ENCODE measurements at regions of chr7 and their contacts with region 1.

Region 1: DNA sequence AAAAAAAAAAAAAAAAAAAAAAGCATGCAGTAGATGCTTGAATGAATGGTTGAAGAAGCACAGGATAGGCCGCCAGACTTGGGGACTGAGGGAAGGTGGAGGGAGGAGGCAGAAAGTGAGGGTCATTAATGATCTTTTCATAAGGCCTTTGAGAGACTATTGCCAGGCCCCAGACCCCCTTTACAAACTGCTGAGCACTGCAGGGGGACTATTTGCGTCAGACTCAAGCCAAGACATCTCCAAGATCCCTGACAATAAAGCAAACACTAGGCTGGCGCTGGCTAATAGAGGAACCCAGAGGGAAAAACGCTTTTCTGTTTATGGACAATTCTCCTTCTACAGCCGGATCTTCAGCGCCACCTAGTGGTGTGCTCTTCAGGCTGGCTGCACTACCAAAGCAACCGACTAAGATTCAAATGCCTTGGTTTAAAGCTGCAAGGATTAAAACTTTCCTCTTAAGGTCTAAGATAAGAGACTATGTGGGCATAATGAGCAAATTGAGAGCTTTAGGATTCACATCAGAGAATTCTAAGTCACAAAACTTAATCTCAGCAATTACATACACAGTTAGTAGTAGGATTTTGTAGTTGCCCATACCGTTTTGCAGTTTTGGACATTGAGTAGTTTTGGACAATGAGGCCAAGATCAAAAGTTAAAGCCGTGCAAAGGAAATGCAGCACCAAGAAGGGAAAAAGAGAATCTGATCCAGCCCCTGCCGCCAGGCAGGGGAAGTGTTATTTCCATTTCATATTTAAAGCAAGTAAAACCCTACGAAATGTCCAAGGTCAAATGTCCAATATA is 17.9 kb upstream of the AGK start:
- DNase-seq: peak; percentile 46 to 70
- H3K4me3 ChIP-seq: no peak overlapping the region
- H3K4me3 Mint-ChIP-seq: no peak overlapping the region
- H3K27ac Mint-ChIP-seq: no peak overlapping the region
- H3K4me1 ChIP-seq: no peaks in the 10 kb centered on the region
- H3K4me1 Mint-ChIP-seq: no peaks in the 10 kb centered on the region
- H3K27me3 ChIP-seq: peaks cover 3% of the 10 kb centered on the region
- H3K27me3 Mint-ChIP-seq: peaks cover 13% of the 10 kb centered on the region
- CTCF ChIP-seq: peak; percentile 91 to 96

Region 2: GRCh38 chr7:141072548-141073172 is 460.7 kb before region 1 on chr7:
- CTCF ChIA-PET with region 1: no interaction called
- POLR2A ChIA-PET with region 1: no interaction called
- intact Hi-C with region 1: loop called (anchors 2 kb)
- DNase-seq: no peak
- H3K4me3 ChIP-seq: no peak overlapping the region
- H3K4me3 Mint-ChIP-seq: peak overlapping the region; percentile 60
- H3K27ac Mint-ChIP-seq: no peak overlapping the region
- H3K4me1 ChIP-seq: no peaks in the 10 kb centered on the region
- H3K4me1 Mint-ChIP-seq: no peaks in the 10 kb centered on the region
- H3K27me3 ChIP-seq: no peaks in the 10 kb centered on the region
- H3K27me3 Mint-ChIP-seq: peaks cover 4% of the 10 kb centered on the region
- CTCF ChIP-seq: no peak

Region 3: DNA sequence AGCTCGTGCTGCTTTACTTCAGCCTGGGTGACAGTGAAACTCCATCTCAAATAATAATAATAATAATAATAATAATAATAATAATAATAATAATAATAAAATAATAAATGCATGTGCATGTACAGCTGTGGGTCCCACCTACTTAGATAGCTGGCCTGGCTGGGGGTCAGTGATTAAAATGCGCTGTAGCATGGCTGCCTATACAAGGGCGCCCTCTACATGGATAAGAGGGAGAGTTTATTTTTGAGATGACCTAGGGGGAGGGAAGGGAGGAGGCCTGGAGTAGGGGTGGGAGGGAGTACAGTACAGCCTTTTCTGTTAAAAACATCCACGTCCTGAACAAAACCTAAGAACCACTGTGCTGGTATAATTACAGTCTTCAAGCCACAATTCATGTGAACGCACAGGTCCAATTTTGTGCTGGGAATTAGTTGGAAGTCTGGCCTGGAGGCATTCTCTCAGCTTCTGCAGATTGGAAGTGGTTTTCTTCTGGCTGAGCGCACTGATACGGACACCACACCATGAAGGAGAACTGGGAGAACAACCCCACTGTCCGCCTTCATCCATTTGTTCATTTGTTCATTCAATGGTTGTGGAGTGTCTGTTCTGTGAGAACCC is 313.0 kb before region 1 on chr7:
- CTCF ChIA-PET with region 1: no interaction called
- POLR2A ChIA-PET with region 1: no interaction called
- intact Hi-C with region 1: no loop called
- DNase-seq: no peak
- H3K4me3 ChIP-seq: no peak overlapping the region
- H3K4me3 Mint-ChIP-seq: no peak overlapping the region
- H3K27ac Mint-ChIP-seq: no peak overlapping the region
- H3K4me1 ChIP-seq: no peaks in the 10 kb centered on the region
- H3K4me1 Mint-ChIP-seq: no peaks in the 10 kb centered on the region
- H3K27me3 ChIP-seq: no peaks in the 10 kb centered on the region; the same call in 1 of the 2 replicates
- H3K27me3 Mint-ChIP-seq: peaks cover 24% of the 10 kb centered on the region
- CTCF ChIP-seq: peak; percentile 15 to 36

Region 4: GRCh38 chr7:141251957-141252356 is 281.4 kb before region 1 on chr7:
- CTCF ChIA-PET with region 1: no interaction called
- POLR2A ChIA-PET with region 1: no interaction called
- intact Hi-C with region 1: loop called (anchors 1 kb)
- DNase-seq: no peak
- H3K4me3 ChIP-seq: no peak overlapping the region
- H3K4me3 Mint-ChIP-seq: no peak overlapping the region
- H3K27ac Mint-ChIP-seq: no peak overlapping the region
- H3K4me1 ChIP-seq: no peaks in the 10 kb centered on the region
- H3K4me1 Mint-ChIP-seq: no peaks in the 10 kb centered on the region
- H3K27me3 ChIP-seq: no peaks in the 10 kb centered on the region; the same call in 1 of the 2 replicates
- H3K27me3 Mint-ChIP-seq: peaks cover 19% of the 10 kb centered on the region
- CTCF ChIP-seq: peak in 1 of 2 experiments; percentile 6

Region 5: DNA sequence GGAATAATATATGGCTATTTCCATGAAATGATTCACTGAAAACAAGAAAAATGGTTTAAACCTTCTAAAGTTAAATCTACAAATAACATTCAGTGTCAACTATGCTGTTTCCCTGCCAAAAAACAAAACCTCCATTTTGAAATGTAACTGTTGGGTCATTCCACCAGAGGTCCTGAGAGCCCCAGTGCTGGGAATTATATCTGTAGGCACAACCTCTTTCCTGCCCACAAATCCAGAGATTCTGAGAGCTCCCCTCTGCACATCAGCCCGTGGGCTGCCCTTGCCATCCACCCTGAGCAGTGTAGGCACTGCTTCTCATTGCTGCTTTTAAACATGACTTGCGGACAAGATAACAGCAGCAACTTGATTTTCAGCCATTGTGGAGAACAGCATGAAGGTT is 260.9 kb before region 1 on chr7:
- CTCF ChIA-PET with region 1: no interaction called
- POLR2A ChIA-PET with region 1: no interaction called
- intact Hi-C with region 1: loop called (anchors 1 kb)
- DNase-seq: no peak
- H3K4me3 ChIP-seq: no peak overlapping the region
- H3K4me3 Mint-ChIP-seq: no peak overlapping the region
- H3K27ac Mint-ChIP-seq: no peak overlapping the region
- H3K4me1 ChIP-seq: peaks cover 5% of the 10 kb centered on the region; the same call in 1 of the 2 replicates
- H3K4me1 Mint-ChIP-seq: no peaks in the 10 kb centered on the region
- H3K27me3 ChIP-seq: no peaks in the 10 kb centered on the region
- H3K27me3 Mint-ChIP-seq: no peaks in the 10 kb centered on the region
- CTCF ChIP-seq: no peak

Region 6: GRCh38 chr7:141339619-141340018 is 193.7 kb before region 1 on chr7:
- CTCF ChIA-PET with region 1: no interaction called
- POLR2A ChIA-PET with region 1: no interaction called
- intact Hi-C with region 1: loop called (anchors 5 kb)
- DNase-seq: no peak
- H3K4me3 ChIP-seq: no peak overlapping the region
- H3K4me3 Mint-ChIP-seq: no peak overlapping the region
- H3K27ac Mint-ChIP-seq: no peak overlapping the region
- H3K4me1 ChIP-seq: no peaks in the 10 kb centered on the region
- H3K4me1 Mint-ChIP-seq: no peaks in the 10 kb centered on the region
- H3K27me3 ChIP-seq: no peaks in the 10 kb centered on the region
- H3K27me3 Mint-ChIP-seq: peaks cover 16% of the 10 kb centered on the region
- CTCF ChIP-seq: no peak

Measured in Caco-2 (cell line).